ENCODE measurements at regions of chr1 and their contacts with region 1.

Region 1: GRCh38 chr1:62746085-62746808 is 37.7 kb upstream of the ATG4C start:
- DNase-seq: no peak
- ATAC-seq: peak; percentile 70
- H3K4me3 ChIP-seq: no peak overlapping the region
- H3K27ac ChIP-seq: no peak overlapping the region
- H3K4me1 ChIP-seq: no peaks in the 10 kb centered on the region
- H3K27me3 ChIP-seq: no peaks in the 10 kb centered on the region
- CTCF ChIP-seq: peak; percentile 37 to 71 (median 44); a peak in 4 of 6 replicates
- EP300 ChIP-seq: no peak
- POLR2A ChIP-seq: no peak
- RAD21 ChIP-seq: peak; percentile 90

Region 2: GRCh38 chr1:62407405-62408009 is 338.7 kb before region 1 on chr1:
- CTCF ChIA-PET with region 1: interaction called, 12 read pairs
- POLR2A ChIA-PET with region 1: no interaction called
- RAD21 ChIA-PET with region 1: interaction called, 4 read pairs
- SMC1A ChIA-PET with region 1: interaction called, 7 read pairs
- in situ Hi-C with region 1: no loop called
- intact Hi-C with region 1: no loop called
- DNase-seq: no peak
- ATAC-seq: peak; percentile 74
- H3K4me3 ChIP-seq: no peak overlapping the region
- H3K27ac ChIP-seq: no peak overlapping the region
- H3K4me1 ChIP-seq: no peaks in the 10 kb centered on the region
- H3K27me3 ChIP-seq: no peaks in the 10 kb centered on the region; a peak in 1 of 4 replicates
- CTCF ChIP-seq: peak; percentile 64 to 73 (median 71)
- EP300 ChIP-seq: no peak
- POLR2A ChIP-seq: no peak
- RAD21 ChIP-seq: peak; percentile 82

Region 3: DNA sequence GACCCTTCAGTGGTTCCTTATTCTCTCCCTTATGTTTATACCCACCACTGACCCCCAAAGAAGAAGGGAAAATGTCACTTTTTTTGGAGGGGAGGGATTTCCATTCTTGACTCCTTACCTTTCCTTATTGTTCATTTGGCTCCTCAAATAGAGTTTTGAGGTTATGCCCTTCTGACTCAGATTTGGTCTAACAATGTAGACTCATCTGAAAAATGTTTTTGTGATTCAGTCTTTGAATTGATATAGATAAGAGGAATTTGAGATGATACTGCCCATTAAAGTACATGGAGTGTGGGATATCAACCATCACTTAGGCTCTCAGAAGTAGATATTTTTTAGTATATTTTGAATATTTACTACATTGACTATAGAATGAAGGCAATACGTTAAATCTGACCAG is 293.3 kb before region 1 on chr1:
- CTCF ChIA-PET with region 1: interaction called, 4 read pairs
- POLR2A ChIA-PET with region 1: no interaction called
- RAD21 ChIA-PET with region 1: interaction called, 6 read pairs
- SMC1A ChIA-PET with region 1: interaction called, 5 read pairs
- in situ Hi-C with region 1: no loop called
- intact Hi-C with region 1: loop called (anchors 5 kb)
- DNase-seq: no peak
- ATAC-seq: no peak
- H3K4me3 ChIP-seq: no peak overlapping the region
- H3K27ac ChIP-seq: no peak overlapping the region
- H3K4me1 ChIP-seq: peaks cover 7% of the 10 kb centered on the region; the same call in 1 of the 2 replicates
- H3K27me3 ChIP-seq: no peaks in the 10 kb centered on the region
- CTCF ChIP-seq: no peak
- EP300 ChIP-seq: no peak
- POLR2A ChIP-seq: no peak
- RAD21 ChIP-seq: no peak

Region 4: GRCh38 chr1:62508187-62508758 is 238.0 kb before region 1 on chr1:
- CTCF ChIA-PET with region 1: interaction called, 305 read pairs
- POLR2A ChIA-PET with region 1: no interaction called
- RAD21 ChIA-PET with region 1: interaction called, 156 read pairs
- SMC1A ChIA-PET with region 1: interaction called, 186 read pairs
- in situ Hi-C with region 1: loop called (anchors 5 kb)
- intact Hi-C with region 1: loop called (anchors 1 kb)
- DNase-seq: peak; percentile 9
- ATAC-seq: peak; percentile 68
- H3K4me3 ChIP-seq: no peak overlapping the region
- H3K27ac ChIP-seq: no peak overlapping the region
- H3K4me1 ChIP-seq: no peaks in the 10 kb centered on the region
- H3K27me3 ChIP-seq: no peaks in the 10 kb centered on the region
- CTCF ChIP-seq: peak; percentile 58 to 68 (median 60)
- EP300 ChIP-seq: no peak
- POLR2A ChIP-seq: no peak
- RAD21 ChIP-seq: peak; percentile 88

Region 5: DNA sequence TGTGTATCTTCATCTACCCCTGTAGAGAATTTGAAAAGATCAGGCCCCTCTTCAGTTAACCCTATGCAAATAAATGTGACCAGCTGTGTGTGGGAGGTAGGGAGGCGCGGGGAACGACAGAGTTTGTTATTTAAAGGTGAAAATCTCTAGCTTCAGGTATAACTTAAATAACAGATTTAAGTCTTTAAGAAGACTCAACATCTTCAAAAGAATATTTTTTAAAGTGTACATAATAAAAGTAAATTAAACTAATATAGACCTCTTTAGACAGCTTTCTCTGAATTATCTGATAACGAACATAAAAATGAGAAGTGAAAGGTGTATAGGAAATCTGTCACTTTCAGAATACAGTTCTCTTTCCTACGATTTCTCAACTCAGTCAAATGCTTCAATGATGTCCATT is 132.9 kb before region 1 on chr1:
- CTCF ChIA-PET with region 1: interaction called, 13 read pairs
- POLR2A ChIA-PET with region 1: no interaction called
- RAD21 ChIA-PET with region 1: interaction called, 6 read pairs
- SMC1A ChIA-PET with region 1: interaction called, 3 read pairs
- in situ Hi-C with region 1: no loop called
- intact Hi-C with region 1: loop called (anchors 10 kb)
- DNase-seq: peak; percentile 27
- ATAC-seq: peak; percentile 98
- H3K4me3 ChIP-seq: 0 out of 2 replicates have a peak overlapping the region, but pooled peaks have one; percentile 4
- H3K27ac ChIP-seq: peak overlapping the region; percentile 66
- H3K4me1 ChIP-seq: peaks cover 11% of the 10 kb centered on the region
- H3K27me3 ChIP-seq: no peaks in the 10 kb centered on the region
- CTCF ChIP-seq: no peak
- EP300 ChIP-seq: peak; percentile 31 to 75; a peak in 3 of 4 replicates
- POLR2A ChIP-seq: no peak
- RAD21 ChIP-seq: no peak

Region 6: DNA sequence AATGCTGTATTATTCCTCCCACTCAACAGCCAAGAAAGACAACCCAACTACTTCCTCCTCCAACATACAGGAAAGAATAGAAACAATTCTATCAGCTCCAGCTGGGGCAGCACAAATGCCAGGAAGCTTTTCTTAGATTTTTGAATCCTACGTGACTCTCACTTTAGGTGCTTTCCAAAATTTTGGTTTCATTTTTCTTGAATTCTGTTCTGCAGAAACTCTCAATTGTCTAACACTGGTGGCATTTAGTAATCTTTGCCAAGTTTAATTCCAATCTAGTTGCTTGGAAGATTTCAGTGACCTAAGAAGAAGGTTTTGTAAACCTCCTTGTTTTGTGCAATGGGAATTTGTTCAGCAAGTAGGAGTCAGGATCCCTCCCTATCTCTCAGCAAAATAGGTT is 21.0 kb before region 1 on chr1:
- CTCF ChIA-PET with region 1: interaction called, 23 read pairs
- POLR2A ChIA-PET with region 1: no interaction called
- RAD21 ChIA-PET with region 1: interaction called, 15 read pairs
- SMC1A ChIA-PET with region 1: interaction called, 43 read pairs
- in situ Hi-C with region 1: no loop called
- intact Hi-C with region 1: no loop called
- DNase-seq: peak; percentile 19
- ATAC-seq: peak; percentile 42
- H3K4me3 ChIP-seq: 0 out of 2 replicates have a peak overlapping the region, but pooled peaks have one; percentile 7
- H3K27ac ChIP-seq: no peak overlapping the region
- H3K4me1 ChIP-seq: 0 out of 2 replicates have a peak, but pooled peaks cover 5% of the 10 kb centered on the region
- H3K27me3 ChIP-seq: no peaks in the 10 kb centered on the region
- CTCF ChIP-seq: no peak
- EP300 ChIP-seq: no peak
- POLR2A ChIP-seq: no peak
- RAD21 ChIP-seq: no peak

Measured in GM12878 (cell line).